Thyroid gland (tissue), 4 donors: ENCODE measurements at regions of chr18 and their contacts with region 1.

Region 1: GRCh38 chr18:23689616-23690504 is 607 bp downstream of the LAMA3 start:
- DNase-seq: peak in 1 of 2 donors; percentile 7
- H3K4me3 ChIP-seq: peak overlapping the region in 2 of 3 donors; percentile 12 to 36
- H3K27ac ChIP-seq: no peak overlapping the region
- H3K4me1 ChIP-seq: peaks cover 0 to 17% of the 10 kb centered on the region in 2 donors
- H3K27me3 ChIP-seq: no peaks in the 10 kb centered on the region
- CTCF ChIP-seq: no peak
- POLR2A ChIP-seq: no peak

Region 2: GRCh38 chr18:23629444-23629946 is 60.4 kb before region 1 on chr18:
- intact Hi-C with region 1: loop called (anchors 10 kb)
- DNase-seq: peak; percentile 11 to 33
- H3K4me3 ChIP-seq: no peak overlapping the region
- H3K27ac ChIP-seq: no peak overlapping the region
- H3K4me1 ChIP-seq: no peaks in the 10 kb centered on the region
- H3K27me3 ChIP-seq: no peaks in the 10 kb centered on the region
- CTCF ChIP-seq: no peak
- POLR2A ChIP-seq: no peak

Region 3: DNA sequence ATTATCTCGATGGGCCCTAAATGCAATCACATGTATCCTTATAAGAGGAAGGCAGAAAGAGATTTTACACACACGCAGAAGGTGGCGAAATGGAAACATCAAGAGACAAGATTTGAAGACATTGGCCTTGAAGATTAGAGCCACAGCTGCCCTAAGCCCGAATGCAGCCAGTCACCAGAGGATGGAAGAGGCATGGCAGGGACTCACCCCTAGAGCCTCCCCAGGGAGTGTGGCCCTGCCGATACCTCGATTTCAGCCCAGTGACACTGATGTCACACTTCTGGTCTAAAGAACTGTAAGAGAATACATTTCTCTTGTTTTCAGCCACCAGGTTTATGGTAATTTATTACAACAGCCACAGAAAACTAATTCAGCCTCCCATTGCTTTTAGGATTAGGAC is 342.1 kb after region 1 on chr18:
- intact Hi-C with region 1: no loop called
- DNase-seq: no peak
- H3K4me3 ChIP-seq: no peak overlapping the region
- H3K27ac ChIP-seq: no peak overlapping the region
- H3K4me1 ChIP-seq: no peaks in the 10 kb centered on the region
- H3K27me3 ChIP-seq: no peaks in the 10 kb centered on the region
- CTCF ChIP-seq: no peak
- POLR2A ChIP-seq: no peak

Region 4: DNA sequence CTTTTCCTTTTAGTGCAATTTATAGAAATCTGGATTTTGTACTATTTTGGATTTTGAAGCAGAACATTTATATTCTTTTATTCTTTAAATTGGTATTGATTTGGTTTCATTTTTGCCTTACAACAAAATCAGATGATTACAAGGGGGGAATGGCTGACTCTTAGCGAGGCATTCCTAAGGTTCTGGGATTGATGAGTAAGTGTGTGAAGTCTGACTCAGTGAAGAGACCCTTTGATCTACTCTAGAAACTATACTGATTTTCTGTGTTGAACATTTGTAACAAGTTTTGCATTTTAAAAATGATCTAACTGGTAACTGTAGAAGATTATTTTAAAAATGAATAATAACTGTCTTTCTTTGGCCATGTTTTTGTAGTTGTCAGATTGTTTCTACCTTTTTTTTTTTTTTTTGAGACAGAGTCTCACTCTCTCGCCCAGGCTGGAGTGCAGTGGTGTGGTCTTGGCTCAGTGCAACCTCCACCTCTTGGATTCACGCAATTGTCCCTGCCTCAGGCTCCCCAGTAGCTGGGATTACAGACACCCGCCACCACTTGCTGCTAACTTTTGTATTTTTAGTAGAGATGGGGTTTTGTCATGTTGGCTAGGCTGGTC is 373.4 kb after region 1 on chr18:
- intact Hi-C with region 1: no loop called
- DNase-seq: no peak
- H3K4me3 ChIP-seq: no peak overlapping the region
- H3K27ac ChIP-seq: no peak overlapping the region
- H3K4me1 ChIP-seq: no peaks in the 10 kb centered on the region
- H3K27me3 ChIP-seq: no peaks in the 10 kb centered on the region
- CTCF ChIP-seq: no peak
- POLR2A ChIP-seq: no peak